ENCODE measurements at regions of chr1 and their contacts with region 1.

Region 1: GRCh38 chr1:37682334-37682987 is 9.9 kb upstream of the CDCA8 start:
- DNase-seq: peak in 2 of 3 donors; percentile 65 to 87
- ATAC-seq: peak; percentile 83
- H3K4me3 ChIP-seq: no peak overlapping the region
- H3K4me1 ChIP-seq: no peaks in the 10 kb centered on the region
- CTCF ChIP-seq: peak; percentile 70

Region 2: DNA sequence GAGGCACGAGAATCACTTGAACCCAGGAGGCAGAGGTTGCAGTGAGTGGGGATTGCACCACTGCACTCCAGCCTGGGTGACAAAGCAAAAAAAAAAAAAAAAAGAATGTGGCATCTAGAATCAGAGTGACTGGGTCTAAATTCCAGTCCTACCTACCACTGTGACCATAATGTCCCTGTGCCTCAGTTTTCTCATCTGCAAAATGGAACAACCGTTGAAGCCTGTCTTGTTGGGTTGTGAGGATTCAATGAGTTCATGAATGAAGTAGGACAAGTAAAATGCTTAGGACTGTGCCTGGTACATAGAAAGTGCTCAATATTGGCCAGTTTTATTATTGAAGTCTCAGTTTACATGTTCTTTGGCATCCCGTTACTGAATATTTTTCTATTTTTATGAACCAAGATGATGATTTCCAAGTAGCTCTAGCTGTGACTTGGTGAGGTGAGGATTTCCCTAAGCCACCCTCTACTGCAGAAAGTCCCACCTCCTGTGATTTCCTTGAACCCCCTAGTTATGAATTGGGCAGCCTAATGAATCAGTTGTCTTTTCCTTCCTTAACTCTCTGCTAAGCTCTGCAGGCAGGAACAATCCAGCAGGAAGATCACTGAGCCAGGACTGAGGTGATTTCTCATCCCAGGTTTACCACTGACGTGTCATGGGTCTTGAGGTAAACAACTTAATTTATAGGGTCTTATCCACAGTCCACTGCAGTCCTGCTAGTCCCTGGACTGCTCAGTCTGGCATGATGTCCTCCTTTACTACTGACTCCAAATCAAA is 149.0 kb before region 1 on chr1:
- intact Hi-C with region 1: no loop called
- DNase-seq: no peak
- ATAC-seq: no peak
- H3K4me3 ChIP-seq: no peak overlapping the region
- H3K4me1 ChIP-seq: no peaks in the 10 kb centered on the region
- CTCF ChIP-seq: no peak

Region 3: GRCh38 chr1:37602750-37603694 is 79.4 kb before region 1 on chr1:
- intact Hi-C with region 1: loop called (anchors 5 to 10 kb)
- DNase-seq: peak in 1 of 3 donors; percentile 48
- ATAC-seq: peak; percentile 56
- H3K4me3 ChIP-seq: no peak overlapping the region
- H3K4me1 ChIP-seq: no peaks in the 10 kb centered on the region
- CTCF ChIP-seq: peak; percentile 48

Measured in mucosa of descending colon (tissue), 3 donors.